GM18951 (cell line): ENCODE measurements at regions of chr16 and their contacts with region 1.

Region 1: GRCh38 chr16:50806099-50807062 is 64.5 kb downstream of the CYLD start:
- POLR2A ChIP-seq: no peak

Region 2: DNA sequence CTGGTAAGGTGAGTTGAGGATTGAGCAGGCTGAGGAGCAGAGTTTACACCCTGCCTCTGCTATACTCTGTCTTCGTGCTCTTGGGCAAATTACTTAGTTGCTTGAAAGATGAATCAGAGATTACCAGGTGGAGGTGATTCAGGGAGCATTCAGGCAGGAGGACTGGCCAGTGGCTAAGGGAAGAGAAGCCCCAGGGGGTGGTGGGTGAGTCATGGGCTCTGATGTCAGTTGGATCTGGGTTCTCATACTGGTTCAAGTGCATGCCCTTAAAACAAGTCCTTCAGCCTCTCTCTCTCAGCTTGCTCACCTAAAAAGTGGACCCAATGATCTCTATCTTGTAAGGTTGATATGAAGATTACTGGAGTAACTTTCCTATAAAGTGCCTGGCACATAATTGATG is 409.2 kb before region 1 on chr16:
- in situ Hi-C with region 1: loop called (anchors 25 kb)
- POLR2A ChIP-seq: no peak